Left lung (tissue), 14 donors: ENCODE measurements at regions of chr5 and their contacts with region 1.

Region 1: DNA sequence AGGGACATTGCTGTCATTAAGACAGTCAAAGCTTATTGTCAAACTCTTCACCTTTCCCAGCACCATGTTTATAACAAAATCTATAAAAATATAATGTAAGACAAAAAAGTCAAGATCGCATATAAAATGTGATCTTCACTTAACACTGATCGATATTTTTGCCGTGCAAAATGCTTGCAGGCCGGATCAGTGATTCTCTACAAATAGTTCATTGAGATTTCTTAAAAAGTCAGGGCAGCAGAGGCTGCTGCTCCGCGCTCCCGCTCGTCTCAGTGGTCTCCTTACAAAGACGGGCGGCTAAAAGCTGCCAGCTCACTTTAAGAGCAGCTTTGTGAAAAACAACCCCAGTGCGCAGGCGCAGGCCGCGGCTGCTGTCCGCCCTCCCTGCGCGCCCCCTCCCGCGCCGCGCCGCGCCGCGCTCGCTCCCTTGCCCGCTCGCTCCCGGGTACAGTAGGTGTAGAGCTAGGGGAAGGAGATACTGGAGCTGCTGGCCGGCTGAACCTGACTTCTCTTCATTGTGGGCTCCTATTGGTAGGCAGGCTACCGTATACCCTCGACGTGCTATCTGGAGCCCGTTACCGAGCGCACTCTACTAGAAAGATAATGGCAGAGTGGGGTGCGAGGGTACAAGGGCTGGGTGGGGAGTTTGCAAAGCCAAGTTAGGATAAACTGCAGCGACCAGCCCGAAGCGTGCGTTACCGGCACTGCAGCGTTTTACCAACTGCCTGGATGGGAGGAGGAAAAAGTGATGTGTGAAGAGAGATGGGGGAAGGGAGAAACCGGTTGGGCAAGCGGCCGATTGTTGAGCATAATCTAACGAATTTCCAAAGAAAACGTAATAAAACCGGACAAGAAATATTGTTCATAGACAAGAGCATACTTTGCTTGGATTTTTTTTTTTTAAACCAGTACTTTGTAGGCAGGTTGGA is at the start of gene ARRDC3:
- DNase-seq: peak; percentile 96 to 99 (median 98)
- ATAC-seq: peak; percentile 65
- H3K4me3 ChIP-seq: peak within 1 kb of the TSS; percentile 63 to 76
- H3K27ac ChIP-seq: peak within 1 kb of the TSS; percentile 99 to 100
- H3K4me1 ChIP-seq: peaks cover 5 to 19% of the 10 kb centered on the region in 2 donors
- H3K27me3 ChIP-seq: no peaks in the 10 kb centered on the region
- CTCF ChIP-seq: no peak
- polyA plus RNA-seq, gene ARRDC3: 110 to 286 (median 128) TPM

Region 2: GRCh38 chr5:90994796-90995195 is 388.5 kb before region 1 on chr5:
- intact Hi-C with region 1: no loop called
- DNase-seq: no peak
- ATAC-seq: no peak
- H3K4me3 ChIP-seq: no peak overlapping the region
- H3K27ac ChIP-seq: no peak overlapping the region
- H3K4me1 ChIP-seq: no peaks in the 10 kb centered on the region
- H3K27me3 ChIP-seq: no peaks in the 10 kb centered on the region
- CTCF ChIP-seq: no peak

Region 3: GRCh38 chr5:91101600-91102379 is 281.5 kb before region 1 on chr5:
- intact Hi-C with region 1: loop called in 1 of 2 experiments (anchors 5 kb)
- DNase-seq: peak in 3 of 4 donors; percentile 54 to 84 (median 72)
- ATAC-seq: peak; percentile 99
- H3K4me3 ChIP-seq: no peak overlapping the region
- H3K27ac ChIP-seq: no peak overlapping the region
- H3K4me1 ChIP-seq: peaks cover 3 to 29% of the 10 kb centered on the region in 2 donors
- H3K27me3 ChIP-seq: no peaks in the 10 kb centered on the region
- CTCF ChIP-seq: peak; percentile 61 to 80

Region 4: DNA sequence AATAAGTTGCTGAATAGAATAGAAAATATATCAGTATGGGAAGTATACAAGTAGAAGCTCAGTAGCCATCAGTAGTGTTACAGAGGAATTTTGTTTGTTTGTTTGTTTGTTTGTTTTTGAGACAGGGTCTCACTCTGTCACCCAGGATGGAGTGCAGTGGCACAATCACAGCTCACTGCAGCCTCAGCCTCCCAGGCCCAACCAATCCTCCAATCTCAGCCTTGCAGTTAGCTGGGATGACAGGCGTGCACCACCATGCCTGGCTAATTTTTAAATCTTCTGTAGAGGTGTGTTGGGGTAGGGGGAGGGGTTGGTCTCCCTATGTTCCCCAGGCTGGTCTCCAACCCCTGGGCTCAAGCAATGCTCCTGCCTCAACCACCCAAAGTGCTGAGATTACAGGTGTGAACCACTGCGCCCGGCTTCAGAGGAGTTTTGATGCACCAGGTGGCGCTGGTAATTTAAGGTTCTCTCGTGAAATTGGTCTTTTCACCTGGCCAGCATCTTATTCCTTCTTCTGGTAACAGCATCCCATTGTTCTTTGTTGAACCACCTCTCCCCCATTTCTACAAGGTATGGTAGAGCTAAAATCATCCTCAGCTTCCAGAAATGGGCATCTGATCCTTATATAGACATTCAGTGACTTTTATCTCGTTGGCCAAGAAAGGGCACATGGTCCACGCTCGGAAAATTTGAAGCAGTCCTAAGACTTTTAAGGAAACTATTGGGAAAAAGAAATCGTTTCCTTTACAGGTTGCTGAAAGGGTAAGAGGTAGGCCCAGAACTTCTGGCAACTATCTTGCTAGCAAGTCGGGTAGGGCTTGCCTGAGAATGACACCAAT is 157.2 kb before region 1 on chr5:
- intact Hi-C with region 1: loop called in 1 of 2 experiments (anchors 10 kb)
- DNase-seq: peak in 1 of 4 donors; percentile 22
- ATAC-seq: peak; percentile 85
- H3K4me3 ChIP-seq: no peak overlapping the region
- H3K27ac ChIP-seq: no peak overlapping the region
- H3K4me1 ChIP-seq: peaks cover 0 to 13% of the 10 kb centered on the region in 2 donors
- H3K27me3 ChIP-seq: no peaks in the 10 kb centered on the region
- CTCF ChIP-seq: peak; percentile 12 to 20

Region 5: DNA sequence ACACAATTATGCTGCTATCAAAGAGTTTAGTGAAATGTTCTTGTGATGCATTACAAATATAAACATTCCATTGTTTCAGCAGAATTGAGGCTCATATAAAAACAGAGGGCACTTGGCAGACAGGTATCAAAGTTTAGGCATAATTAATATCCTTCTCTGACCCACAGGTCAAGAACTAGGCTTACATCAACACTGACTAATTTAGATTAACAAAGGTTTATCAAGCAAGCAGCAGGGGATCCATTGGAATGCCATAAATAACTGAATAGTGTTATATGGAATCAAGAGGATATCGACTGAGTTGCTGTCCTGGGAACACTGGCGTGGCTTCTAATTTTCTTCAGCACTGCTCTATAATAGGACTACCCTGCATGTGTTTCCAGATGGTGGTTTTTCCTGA is 414.3 kb after region 1 on chr5:
- intact Hi-C with region 1: no loop called
- DNase-seq: no peak
- ATAC-seq: no peak
- H3K4me3 ChIP-seq: no peak overlapping the region
- H3K27ac ChIP-seq: no peak overlapping the region
- H3K4me1 ChIP-seq: no peaks in the 10 kb centered on the region
- H3K27me3 ChIP-seq: no peaks in the 10 kb centered on the region
- CTCF ChIP-seq: no peak